Colonic mucosa (tissue), 4 donors: ENCODE measurements at regions of chr4 and their contacts with region 1.

Region 1: GRCh38 chr4:98467627-98468072 is 190.8 kb downstream of the TSPAN5 start:
- DNase-seq: peak; percentile 80
- H3K4me3 ChIP-seq: peak overlapping the region; percentile 19
- H3K27ac ChIP-seq: no peak overlapping the region
- H3K4me1 ChIP-seq: peaks cover 3% of the 10 kb centered on the region
- H3K27me3 ChIP-seq: no peaks in the 10 kb centered on the region
- CTCF ChIP-seq: peak; percentile 64

Region 2: DNA sequence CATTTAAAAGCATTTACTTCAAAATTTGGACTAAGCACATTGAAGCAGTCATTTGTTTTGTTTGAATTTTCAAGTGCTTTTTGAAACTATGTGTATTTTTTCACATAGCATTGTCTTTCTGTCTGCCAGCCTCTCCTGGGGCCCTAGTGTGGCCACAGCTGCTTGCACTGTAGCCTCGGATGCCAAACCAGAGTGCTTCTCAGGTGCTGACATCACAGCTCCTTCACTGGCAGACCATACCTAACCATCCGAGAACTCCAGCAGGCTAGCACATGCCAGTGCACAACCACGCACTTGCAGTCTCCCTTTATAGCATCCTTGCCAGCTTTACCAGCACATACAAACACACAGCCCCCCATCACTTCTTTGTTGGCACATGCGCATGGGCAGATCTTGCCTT is 1344.1 kb before region 1 on chr4:
- intact Hi-C with region 1: no loop called
- DNase-seq: no peak
- H3K4me3 ChIP-seq: no peak overlapping the region
- H3K27ac ChIP-seq: no peak overlapping the region
- H3K4me1 ChIP-seq: no peaks in the 10 kb centered on the region
- H3K27me3 ChIP-seq: no peaks in the 10 kb centered on the region
- CTCF ChIP-seq: no peak

Region 3: DNA sequence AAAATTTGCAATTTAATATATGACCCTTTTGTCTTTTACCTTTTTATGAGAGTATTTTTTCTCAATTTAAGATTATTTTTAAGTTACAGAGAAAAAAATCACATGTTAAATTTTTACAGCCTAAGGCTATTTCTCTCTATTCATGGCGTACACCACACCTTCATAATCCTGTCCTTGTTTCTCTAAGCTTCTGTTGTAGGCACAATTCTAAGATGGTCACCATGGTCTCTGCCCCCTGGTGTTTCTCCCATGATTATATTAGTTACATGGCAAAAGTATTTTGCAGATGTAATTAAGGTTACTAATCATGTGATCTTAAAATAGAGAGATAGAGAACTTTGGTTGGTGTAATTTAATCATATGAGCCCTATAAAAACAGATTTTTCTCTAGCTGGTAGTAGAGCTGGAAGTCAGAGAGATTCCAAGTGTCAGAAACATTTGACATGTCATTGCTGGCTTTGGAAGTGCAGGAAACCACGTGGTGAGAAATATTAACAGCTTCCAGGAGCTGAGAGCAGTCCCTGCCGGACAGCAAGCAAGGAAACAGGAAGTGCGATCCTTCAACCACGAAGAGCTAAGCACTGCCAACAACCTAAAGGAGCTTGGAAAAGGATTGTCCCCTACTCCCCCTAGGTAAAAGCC is 371.4 kb after region 1 on chr4:
- intact Hi-C with region 1: loop called (anchors 10 kb)
- DNase-seq: no peak
- H3K4me3 ChIP-seq: no peak overlapping the region
- H3K27ac ChIP-seq: no peak overlapping the region
- H3K4me1 ChIP-seq: no peaks in the 10 kb centered on the region
- H3K27me3 ChIP-seq: no peaks in the 10 kb centered on the region
- CTCF ChIP-seq: no peak

Region 4: DNA sequence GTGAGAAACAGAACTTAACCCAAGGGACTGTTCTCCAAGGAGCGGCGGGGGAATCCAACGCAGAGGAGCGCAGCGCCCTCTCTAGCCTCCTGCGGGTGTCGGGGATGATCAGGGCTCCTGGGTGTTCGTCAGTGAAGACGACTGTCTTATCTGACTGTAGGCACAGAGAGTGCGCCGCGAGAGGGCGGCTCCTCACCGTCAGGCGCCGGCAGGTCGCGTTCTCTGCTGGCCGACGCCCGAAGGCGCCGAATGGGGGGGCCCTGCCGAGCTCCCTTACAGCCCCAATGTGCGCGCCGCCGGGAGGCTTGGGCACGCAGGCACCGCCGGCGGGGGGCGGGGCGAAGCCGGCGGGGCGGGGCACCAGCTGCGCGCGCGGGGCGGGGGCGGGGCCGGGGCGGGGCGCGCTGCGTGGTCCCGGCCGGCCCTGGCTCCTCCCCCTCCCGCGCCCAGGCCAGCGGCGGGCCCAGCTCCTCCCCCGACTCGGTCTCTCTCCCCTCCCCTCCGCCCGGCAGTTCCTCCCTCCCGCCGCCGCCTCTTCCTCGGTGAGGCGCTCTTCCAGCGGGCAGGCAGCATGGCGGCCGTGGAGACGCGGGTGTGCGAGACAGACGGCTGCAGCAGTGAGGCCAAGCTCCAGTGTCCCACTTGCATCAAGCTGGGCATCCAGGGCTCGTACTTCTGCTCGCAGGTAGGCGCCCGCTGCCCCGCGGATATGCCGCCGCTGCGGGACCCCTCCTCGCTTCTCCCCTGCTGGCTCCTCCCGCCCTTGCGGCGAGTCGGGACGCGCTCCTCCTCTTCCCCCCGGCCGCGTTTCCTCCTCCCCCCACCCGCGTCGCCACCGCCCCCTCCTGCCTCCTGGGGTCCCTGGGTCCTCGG is 527.8 kb after region 1 on chr4 and contains the start of gene METAP1:
- intact Hi-C with region 1: loop called (anchors 5 kb)
- DNase-seq: peak; percentile 94
- H3K4me3 ChIP-seq: peak within 1 kb of the TSS; percentile 91
- H3K27ac ChIP-seq: peak within 1 kb of the TSS; percentile 87
- H3K4me1 ChIP-seq: peaks cover 4% of the 10 kb centered on the region
- H3K27me3 ChIP-seq: no peaks in the 10 kb centered on the region
- CTCF ChIP-seq: peak; percentile 43
- total RNA-seq, gene METAP1: 66.2 to 69.3 TPM

Region 5: DNA sequence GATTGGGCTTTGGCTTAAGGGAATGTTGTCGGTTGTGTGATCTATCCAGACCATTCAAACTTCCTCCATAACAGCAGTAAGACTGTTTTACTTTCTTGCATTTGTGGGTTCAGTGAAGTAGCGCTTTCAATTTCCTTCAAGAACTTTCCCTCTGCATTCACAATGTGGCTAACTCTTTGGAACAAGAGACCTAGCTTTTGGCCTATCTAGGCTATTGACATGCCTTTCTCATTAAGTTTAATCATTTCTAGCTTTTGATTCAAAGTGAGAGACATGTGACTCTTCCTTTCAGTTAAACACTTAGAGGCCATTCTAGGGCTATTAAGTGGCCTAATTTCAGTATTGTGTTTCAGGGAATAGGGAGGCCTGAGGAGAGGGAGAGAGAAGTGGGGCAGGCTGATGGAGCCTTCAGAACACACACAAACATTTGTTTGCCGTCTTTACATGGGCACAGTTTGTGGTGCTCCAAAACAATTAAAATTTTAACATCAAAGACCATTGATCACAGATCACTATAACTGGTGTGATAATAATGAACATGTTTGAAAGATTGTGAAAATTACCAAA is 586.9 kb after region 1 on chr4:
- intact Hi-C with region 1: loop called (anchors 10 kb)
- DNase-seq: no peak
- H3K4me3 ChIP-seq: no peak overlapping the region
- H3K27ac ChIP-seq: no peak overlapping the region
- H3K4me1 ChIP-seq: no peaks in the 10 kb centered on the region
- H3K27me3 ChIP-seq: no peaks in the 10 kb centered on the region
- CTCF ChIP-seq: no peak

Region 6: GRCh38 chr4:99462875-99463464 is 995.3 kb after region 1 on chr4:
- intact Hi-C with region 1: loop called (anchors 10 kb)
- DNase-seq: peak; percentile 62
- H3K4me3 ChIP-seq: no peak overlapping the region
- H3K27ac ChIP-seq: no peak overlapping the region
- H3K4me1 ChIP-seq: no peaks in the 10 kb centered on the region
- H3K27me3 ChIP-seq: no peaks in the 10 kb centered on the region
- CTCF ChIP-seq: peak; percentile 64